SK-N-SH (cell line): ENCODE measurements at regions of chr11 and their contacts with region 1.

Region 1: DNA sequence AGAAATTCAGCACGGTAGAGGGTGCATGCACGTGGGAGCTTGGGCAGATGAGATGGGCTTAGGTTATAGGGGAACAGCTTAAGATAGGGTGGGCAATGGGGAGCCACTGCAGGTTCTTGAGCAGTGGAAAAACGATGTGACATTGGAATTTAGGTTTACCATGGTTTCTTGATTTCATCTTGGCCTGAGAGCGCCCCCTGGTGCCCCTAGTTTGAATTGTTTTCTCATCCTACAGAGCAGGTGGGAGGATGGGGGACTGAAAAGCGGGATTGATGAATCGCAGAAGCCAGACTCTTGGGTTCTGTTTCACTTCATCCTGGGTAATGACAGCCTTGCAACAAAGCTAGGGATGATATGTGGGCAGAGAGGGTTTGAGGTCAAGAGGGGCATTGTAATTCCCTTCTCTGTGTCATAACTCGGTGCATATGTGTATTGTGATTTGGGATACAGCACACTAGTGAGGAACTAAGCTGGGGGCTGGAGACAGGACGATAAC is 6.7 kb upstream of the MCAM start:
- DNase-seq: peak; percentile 86
- H3K4me3 ChIP-seq: peak overlapping the region in 1 of 2 experiments; percentile 31; a peak in 1 of 4 replicates
- H3K27ac ChIP-seq: no peak overlapping the region
- H3K4me1 ChIP-seq: peaks cover 0 to 11% of the 10 kb centered on the region in 2 experiments; a peak in 1 of 4 replicates
- H3K27me3 ChIP-seq: no peaks in the 10 kb centered on the region
- CTCF ChIP-seq: peak; percentile 83
- EP300 ChIP-seq: peak in 1 of 2 experiments; percentile 69; a peak in 2 of 4 replicates
- RAD21 ChIP-seq: peak; percentile 85

Region 2: GRCh38 chr11:119134389-119134978 is 189.1 kb before region 1 on chr11:
- CTCF ChIA-PET with region 1: interaction called, 12 read pairs
- POLR2A ChIA-PET with region 1: no interaction called
- DNase-seq: peak; percentile 48
- H3K4me3 ChIP-seq: no peak overlapping the region
- H3K27ac ChIP-seq: no peak overlapping the region
- H3K4me1 ChIP-seq: no peaks in the 10 kb centered on the region
- H3K27me3 ChIP-seq: no peaks in the 10 kb centered on the region
- CTCF ChIP-seq: peak; percentile 65
- EP300 ChIP-seq: no peak
- RAD21 ChIP-seq: no peak

Region 3: DNA sequence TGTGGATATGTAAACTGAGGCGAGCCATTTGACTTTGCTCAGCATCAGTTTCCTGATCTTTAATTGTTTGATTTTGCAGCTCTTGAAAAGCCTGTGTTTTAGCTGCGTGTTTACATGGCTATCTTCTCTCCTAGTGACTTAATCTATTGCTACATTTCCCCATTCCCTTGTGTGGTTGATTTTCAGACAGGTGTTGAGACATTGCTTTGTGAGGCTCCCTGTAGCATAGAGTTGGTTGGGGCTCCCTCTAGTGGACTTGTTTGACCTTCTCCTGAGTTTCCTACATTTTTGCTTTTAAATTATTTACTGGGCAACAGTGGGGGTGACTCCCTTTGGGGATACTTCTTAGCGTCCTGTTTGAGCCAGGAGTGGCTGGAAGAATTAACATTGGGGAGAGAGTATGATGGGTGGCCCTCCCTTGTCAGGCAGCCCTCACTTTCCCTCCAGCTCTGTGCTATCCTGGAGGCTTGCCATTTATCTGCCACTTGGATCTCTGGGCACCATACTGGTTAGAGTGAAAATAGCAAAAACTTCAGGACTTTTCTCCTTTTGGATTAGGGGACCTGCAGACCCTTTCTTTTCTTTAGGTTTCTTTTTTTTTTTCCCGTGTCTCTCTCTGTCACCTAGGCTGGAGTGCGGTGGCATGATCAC is 126.6 kb before region 1 on chr11:
- CTCF ChIA-PET with region 1: interaction called, 12 read pairs
- POLR2A ChIA-PET with region 1: no interaction called
- DNase-seq: peak; percentile 81
- H3K4me3 ChIP-seq: no peak overlapping the region; a peak in 1 of 4 replicates
- H3K27ac ChIP-seq: no peak overlapping the region
- H3K4me1 ChIP-seq: no peaks in the 10 kb centered on the region
- H3K27me3 ChIP-seq: no peaks in the 10 kb centered on the region
- CTCF ChIP-seq: peak; percentile 89
- EP300 ChIP-seq: no peak
- RAD21 ChIP-seq: peak; percentile 93

Region 4: DNA sequence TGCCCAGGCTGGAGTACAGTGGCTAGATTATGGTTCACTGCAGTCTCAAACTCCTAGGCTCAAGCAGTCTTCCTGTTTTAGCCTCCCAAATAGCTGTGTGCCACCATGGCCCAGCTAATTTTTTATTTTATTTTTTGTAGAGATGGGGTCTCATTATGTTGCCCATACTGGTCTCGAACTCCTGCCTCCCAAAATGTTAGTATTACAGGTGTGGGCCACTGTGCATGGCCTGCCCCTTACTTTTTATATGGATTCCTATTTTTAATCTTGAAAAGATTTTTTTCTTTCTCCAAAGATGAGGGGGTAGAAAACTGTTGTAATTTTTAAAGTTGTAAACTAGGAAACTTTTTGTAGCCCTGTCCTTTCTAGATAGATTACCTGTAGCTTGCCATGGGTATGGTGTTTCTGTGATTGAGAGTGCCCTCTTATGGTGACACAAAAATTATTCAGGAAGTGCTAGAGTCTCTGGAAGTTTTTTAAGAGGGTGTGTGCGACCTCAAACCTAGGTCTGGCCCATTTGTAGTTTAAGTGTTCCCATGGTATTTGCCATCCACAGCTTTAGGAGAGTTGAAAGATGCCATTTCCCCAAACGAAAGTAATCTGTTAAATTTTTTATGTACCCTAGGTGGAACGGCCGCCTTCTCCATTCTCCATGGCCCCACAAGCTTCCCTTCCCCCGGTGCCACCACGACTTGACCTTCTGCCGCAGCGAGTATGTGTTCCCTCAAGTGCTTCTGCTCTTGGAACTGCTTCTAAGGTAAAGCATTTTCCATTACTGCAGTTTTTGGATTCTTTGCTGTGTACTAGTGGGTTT is 39.0 kb before region 1 on chr11:
- CTCF ChIA-PET with region 1: interaction called, 21 read pairs
- POLR2A ChIA-PET with region 1: no interaction called
- DNase-seq: peak; percentile 36
- H3K4me3 ChIP-seq: no peak overlapping the region
- H3K27ac ChIP-seq: no peak overlapping the region
- H3K4me1 ChIP-seq: no peaks in the 10 kb centered on the region
- H3K27me3 ChIP-seq: no peaks in the 10 kb centered on the region
- CTCF ChIP-seq: peak; percentile 63
- EP300 ChIP-seq: no peak
- RAD21 ChIP-seq: peak; percentile 71

Region 5: DNA sequence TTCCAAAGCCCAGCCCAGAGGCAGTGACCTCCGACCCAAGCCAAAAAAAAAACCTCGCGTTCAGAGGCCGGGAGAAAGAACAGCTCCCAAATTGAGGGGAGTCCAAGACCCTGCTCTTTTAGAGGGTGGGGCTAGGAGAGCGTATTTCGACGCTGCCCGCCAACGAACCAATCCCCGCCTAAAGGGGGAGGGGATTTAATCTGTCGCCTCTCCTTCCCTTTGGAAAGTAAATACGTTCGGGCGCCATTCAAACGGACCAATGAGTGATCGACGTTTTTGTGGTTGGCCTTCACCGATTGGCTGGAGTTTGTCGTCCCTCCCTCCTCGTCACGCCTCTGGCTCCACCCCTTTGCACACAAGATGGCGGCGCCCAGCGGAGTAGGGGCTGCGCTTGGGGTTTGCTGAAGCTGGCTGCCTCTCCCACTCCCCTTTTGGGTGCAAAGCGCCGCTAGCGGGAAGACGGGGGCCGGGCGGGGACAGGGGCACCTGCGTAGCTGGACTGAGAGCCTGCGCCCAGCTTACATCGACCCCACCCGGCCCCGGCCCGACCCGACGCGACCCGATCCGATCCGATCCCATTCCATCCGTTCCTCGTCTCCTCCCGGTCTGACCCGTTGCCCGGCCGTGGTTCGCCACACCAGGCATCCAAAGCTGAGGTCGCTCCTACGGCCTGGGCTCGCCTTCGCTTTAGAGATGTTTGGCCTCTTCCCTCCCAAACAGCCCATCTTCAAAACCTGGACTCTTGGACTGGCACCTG is 10.8 kb after region 1 on chr11 and contains the start of gene RNF26:
- CTCF ChIA-PET with region 1: interaction called, 106 read pairs
- POLR2A ChIA-PET with region 1: interaction called, 8 read pairs
- DNase-seq: peak; percentile 97
- H3K4me3 ChIP-seq: peak within 1 kb of the TSS; percentile 84 to 96
- H3K27ac ChIP-seq: peak within 1 kb of the TSS; percentile 48 to 76
- H3K4me1 ChIP-seq: peaks cover 16 to 37% of the 10 kb centered on the region in 2 experiments; a peak in 3 of 4 replicates
- H3K27me3 ChIP-seq: no peaks in the 10 kb centered on the region
- CTCF ChIP-seq: no peak
- EP300 ChIP-seq: no peak
- RAD21 ChIP-seq: no peak
- polyA plus RNA-seq, gene RNF26: 26.6 and 31.9 TPM in 2 replicates

Region 6: GRCh38 chr11:119474682-119475596 is 151.4 kb after region 1 on chr11:
- CTCF ChIA-PET with region 1: interaction called, 11 read pairs
- POLR2A ChIA-PET with region 1: no interaction called
- DNase-seq: peak; percentile 86
- H3K4me3 ChIP-seq: no peak overlapping the region; a peak in 1 of 4 replicates
- H3K27ac ChIP-seq: no peak overlapping the region
- H3K4me1 ChIP-seq: peaks cover 19 to 26% of the 10 kb centered on the region in 2 experiments; a peak in 3 of 4 replicates
- H3K27me3 ChIP-seq: 0 out of 2 replicates have a peak, but pooled peaks cover 6% of the 10 kb centered on the region
- CTCF ChIP-seq: peak; percentile 96
- EP300 ChIP-seq: no peak
- RAD21 ChIP-seq: peak; percentile 98